Endothelial cell of umbilical vein (primary cell): ENCODE measurements at regions of chr1 and their contacts with region 1.

Region 1: DNA sequence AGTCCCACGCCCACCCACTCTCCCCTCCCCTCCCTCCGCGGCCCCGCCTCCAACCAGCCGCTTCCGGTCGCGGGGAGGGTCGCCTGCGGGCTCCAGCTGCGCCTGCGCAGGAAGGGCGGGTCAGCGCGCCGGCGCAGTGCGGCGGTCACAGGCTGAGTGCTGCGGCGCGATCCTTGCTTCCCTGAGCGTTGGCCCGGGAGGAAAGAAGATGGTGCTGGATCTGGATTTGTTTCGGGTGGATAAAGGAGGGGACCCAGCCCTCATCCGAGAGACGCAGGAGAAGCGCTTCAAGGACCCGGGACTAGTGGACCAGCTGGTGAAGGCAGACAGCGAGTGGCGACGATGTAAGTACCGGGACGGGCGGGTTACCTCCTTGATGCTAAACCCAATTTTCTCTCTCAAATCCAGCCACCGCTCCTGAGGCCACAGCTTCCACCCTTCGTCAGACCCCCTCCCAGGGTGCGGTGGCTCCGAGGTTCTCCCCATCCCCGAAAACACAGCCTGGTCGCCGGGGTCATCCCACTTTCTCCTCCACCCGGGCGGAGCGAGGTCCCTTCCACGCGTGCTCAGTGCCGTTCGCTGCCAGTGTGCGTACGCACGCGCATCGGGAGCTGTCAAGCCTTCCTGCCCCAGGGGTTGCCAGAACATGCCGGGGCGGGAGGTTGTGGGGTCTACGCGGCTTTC is at the start of gene SARS1:
- DNase-seq: peak; percentile 91
- H3K4me3 ChIP-seq: peak within 1 kb of the TSS; percentile 55 to 100 (median 94)
- H3K27ac ChIP-seq: peak within 1 kb of the TSS; percentile 76
- H3K4me1 ChIP-seq: peaks cover 20% of the 10 kb centered on the region
- H3K27me3 ChIP-seq: peaks cover 0 to 2% of the 10 kb centered on the region in 2 experiments
- CTCF ChIP-seq: no peak
- POLR2A ChIP-seq: peak; percentile 88
- total RNA-seq, gene SARS1: 176 and 178 TPM in 2 replicates

Region 2: GRCh38 chr1:109193653-109194590 is 20.0 kb before region 1 on chr1:
- CTCF ChIA-PET with region 1: interaction called, 13 read pairs
- POLR2A ChIA-PET with region 1: no interaction called
- dilution Hi-C with region 1: no loop called
- intact Hi-C with region 1: loop called (anchors 1 kb)
- DNase-seq: peak; percentile 19
- H3K4me3 ChIP-seq: no peak overlapping the region
- H3K27ac ChIP-seq: no peak overlapping the region
- H3K4me1 ChIP-seq: peaks cover 31% of the 10 kb centered on the region
- H3K27me3 ChIP-seq: no peaks in the 10 kb centered on the region
- CTCF ChIP-seq: peak; percentile 51 to 57
- POLR2A ChIP-seq: no peak